Caco-2 (cell line): ENCODE measurements at regions of chr11 and their contacts with region 1.

Region 1: GRCh38 chr11:96464700-96465307 is 75.0 kb downstream of the JRKL start:
- DNase-seq: peak in 1 of 2 experiments; percentile 66
- H3K4me3 ChIP-seq: no peak overlapping the region
- H3K4me3 Mint-ChIP-seq: no peak overlapping the region
- H3K27ac Mint-ChIP-seq: no peak overlapping the region
- H3K4me1 ChIP-seq: peaks cover 6% of the 10 kb centered on the region
- H3K4me1 Mint-ChIP-seq: no peaks in the 10 kb centered on the region
- H3K27me3 ChIP-seq: no peaks in the 10 kb centered on the region; the same call in 1 of the 2 replicates
- H3K27me3 Mint-ChIP-seq: peaks cover 12% of the 10 kb centered on the region
- CTCF ChIP-seq: peak; percentile 84 to 96

Region 2: DNA sequence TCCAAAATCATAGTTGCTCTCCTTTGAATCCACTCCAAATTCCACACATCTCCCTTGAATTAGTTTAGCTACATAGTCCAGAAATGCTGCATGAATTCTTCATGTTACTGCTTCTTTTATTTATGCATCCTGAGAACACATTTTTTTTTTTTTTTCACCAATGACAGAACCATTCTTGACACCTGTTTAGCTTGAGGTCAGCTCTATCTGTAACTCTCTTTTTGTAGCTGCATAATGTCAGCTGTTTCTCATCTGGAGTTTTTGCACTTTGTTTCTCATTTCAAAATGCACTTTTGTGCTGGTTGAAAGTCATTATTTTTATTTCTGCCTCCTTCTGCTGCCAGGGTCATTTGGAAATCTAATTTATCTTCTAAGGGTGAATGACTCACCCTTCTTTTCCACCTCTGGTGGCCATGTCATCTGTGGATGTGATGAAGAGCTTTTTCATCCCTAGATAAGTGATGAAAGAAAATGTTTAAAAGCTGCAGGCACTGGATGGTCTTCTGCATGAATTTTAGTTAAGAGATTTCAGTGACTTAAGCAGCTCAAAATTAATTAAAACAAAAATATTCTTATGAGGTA is 18.7 kb after region 1 on chr11:
- CTCF ChIA-PET with region 1: interaction called, 11 read pairs
- POLR2A ChIA-PET with region 1: no interaction called
- intact Hi-C with region 1: no loop called
- DNase-seq: no peak
- H3K4me3 ChIP-seq: no peak overlapping the region
- H3K4me3 Mint-ChIP-seq: no peak overlapping the region
- H3K27ac Mint-ChIP-seq: no peak overlapping the region
- H3K4me1 ChIP-seq: peaks cover 12% of the 10 kb centered on the region; the same call in 1 of the 2 replicates
- H3K4me1 Mint-ChIP-seq: no peaks in the 10 kb centered on the region
- H3K27me3 ChIP-seq: no peaks in the 10 kb centered on the region
- H3K27me3 Mint-ChIP-seq: peaks cover 4% of the 10 kb centered on the region
- CTCF ChIP-seq: no peak

Region 3: GRCh38 chr11:96500440-96500839 is 35.6 kb after region 1 on chr11:
- CTCF ChIA-PET with region 1: no interaction called
- POLR2A ChIA-PET with region 1: no interaction called
- intact Hi-C with region 1: no loop called
- DNase-seq: no peak
- H3K4me3 ChIP-seq: no peak overlapping the region
- H3K4me3 Mint-ChIP-seq: no peak overlapping the region
- H3K27ac Mint-ChIP-seq: no peak overlapping the region
- H3K4me1 ChIP-seq: no peaks in the 10 kb centered on the region
- H3K4me1 Mint-ChIP-seq: no peaks in the 10 kb centered on the region
- H3K27me3 ChIP-seq: no peaks in the 10 kb centered on the region
- H3K27me3 Mint-ChIP-seq: peaks cover 3% of the 10 kb centered on the region
- CTCF ChIP-seq: no peak

Region 4: GRCh38 chr11:96680211-96681018 is 215.6 kb after region 1 on chr11:
- CTCF ChIA-PET with region 1: interaction called, 15 read pairs
- POLR2A ChIA-PET with region 1: no interaction called
- intact Hi-C with region 1: no loop called
- DNase-seq: no peak
- H3K4me3 ChIP-seq: no peak overlapping the region
- H3K4me3 Mint-ChIP-seq: no peak overlapping the region
- H3K27ac Mint-ChIP-seq: no peak overlapping the region
- H3K4me1 ChIP-seq: 0 out of 2 replicates have a peak, but pooled peaks cover 4% of the 10 kb centered on the region
- H3K4me1 Mint-ChIP-seq: no peaks in the 10 kb centered on the region
- H3K27me3 ChIP-seq: no peaks in the 10 kb centered on the region
- H3K27me3 Mint-ChIP-seq: no peaks in the 10 kb centered on the region
- CTCF ChIP-seq: no peak

Region 5: DNA sequence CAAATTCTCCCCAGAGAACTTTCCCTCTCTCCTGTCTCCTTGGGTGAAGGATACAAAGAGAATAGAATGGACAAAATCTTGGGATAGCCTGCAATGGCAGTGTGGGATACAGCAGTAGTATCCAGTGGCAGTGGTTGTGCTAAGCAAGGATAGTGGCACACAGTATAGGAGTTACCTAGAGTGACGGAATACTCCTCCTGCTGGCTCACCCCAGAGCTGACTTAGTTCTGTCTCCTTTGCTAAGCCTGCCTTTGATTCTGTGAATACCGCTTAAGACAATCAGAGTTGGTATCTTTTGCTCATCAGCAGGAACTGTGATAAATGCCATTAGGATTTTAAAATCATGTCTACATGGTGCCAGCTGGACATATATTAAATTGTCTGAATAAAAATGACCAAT is 329.3 kb after region 1 on chr11:
- CTCF ChIA-PET with region 1: interaction called, 18 read pairs
- POLR2A ChIA-PET with region 1: no interaction called
- intact Hi-C with region 1: loop called (anchors 1 kb)
- DNase-seq: peak in 1 of 2 experiments; percentile 31
- H3K4me3 ChIP-seq: no peak overlapping the region
- H3K4me3 Mint-ChIP-seq: no peak overlapping the region
- H3K27ac Mint-ChIP-seq: no peak overlapping the region
- H3K4me1 ChIP-seq: no peaks in the 10 kb centered on the region
- H3K4me1 Mint-ChIP-seq: no peaks in the 10 kb centered on the region
- H3K27me3 ChIP-seq: no peaks in the 10 kb centered on the region; the same call in none of the 2 replicates
- H3K27me3 Mint-ChIP-seq: peaks cover 18% of the 10 kb centered on the region
- CTCF ChIP-seq: peak; percentile 38 to 55

Region 6: DNA sequence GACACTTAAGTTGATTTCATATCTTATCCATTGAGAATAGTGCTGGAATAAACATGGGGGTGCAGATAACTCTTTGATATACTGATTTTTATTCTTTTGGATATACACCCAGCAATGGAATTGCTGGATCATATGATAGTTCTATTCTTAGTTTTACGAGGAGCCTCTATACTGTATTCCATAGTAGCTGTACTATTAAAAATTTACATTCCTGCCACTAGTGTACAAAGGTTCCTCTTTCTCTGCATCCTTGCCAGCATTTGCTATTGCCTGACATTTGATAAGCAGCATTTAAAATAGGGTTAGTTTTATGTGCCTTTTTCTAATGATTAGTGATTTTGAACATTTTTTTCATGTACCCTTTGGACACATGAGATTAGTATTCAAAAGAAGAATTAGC is 479.2 kb after region 1 on chr11:
- CTCF ChIA-PET with region 1: interaction called, 4 read pairs
- POLR2A ChIA-PET with region 1: no interaction called
- intact Hi-C with region 1: loop called (anchors 5 kb)
- DNase-seq: no peak
- H3K4me3 ChIP-seq: no peak overlapping the region
- H3K4me3 Mint-ChIP-seq: no peak overlapping the region
- H3K27ac Mint-ChIP-seq: no peak overlapping the region
- H3K4me1 ChIP-seq: no peaks in the 10 kb centered on the region
- H3K4me1 Mint-ChIP-seq: no peaks in the 10 kb centered on the region
- H3K27me3 ChIP-seq: no peaks in the 10 kb centered on the region
- H3K27me3 Mint-ChIP-seq: peaks cover 9% of the 10 kb centered on the region
- CTCF ChIP-seq: peak; percentile 38 to 44

Region 7: DNA sequence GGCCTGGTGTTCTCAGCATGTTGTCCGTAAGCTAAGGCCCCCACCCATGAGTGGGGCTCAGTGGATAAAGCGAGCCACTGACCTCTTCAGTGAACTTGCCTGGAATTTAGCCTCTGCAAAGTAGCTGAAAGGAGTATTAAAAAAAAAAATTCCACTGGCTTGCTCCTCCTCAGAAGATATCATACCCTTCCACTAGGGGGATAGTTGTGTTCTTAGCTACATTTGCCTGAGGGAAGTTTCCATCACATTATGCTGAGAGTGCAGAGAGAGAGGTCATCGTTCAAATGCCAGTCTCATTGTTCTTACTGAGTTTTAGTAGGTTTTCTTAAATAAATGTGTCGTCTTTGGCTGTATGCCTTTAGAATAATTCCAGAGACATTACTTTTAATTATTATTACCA is 804.7 kb after region 1 on chr11:
- CTCF ChIA-PET with region 1: interaction called, 7 read pairs
- POLR2A ChIA-PET with region 1: no interaction called
- intact Hi-C with region 1: loop called (anchors 1 kb)
- DNase-seq: peak in 1 of 2 experiments; percentile 59
- H3K4me3 ChIP-seq: no peak overlapping the region
- H3K4me3 Mint-ChIP-seq: no peak overlapping the region
- H3K27ac Mint-ChIP-seq: no peak overlapping the region
- H3K4me1 ChIP-seq: no peaks in the 10 kb centered on the region
- H3K4me1 Mint-ChIP-seq: no peaks in the 10 kb centered on the region
- H3K27me3 ChIP-seq: no peaks in the 10 kb centered on the region
- H3K27me3 Mint-ChIP-seq: peaks cover 2% of the 10 kb centered on the region
- CTCF ChIP-seq: peak; percentile 63 to 67